Activated CD4-positive, alpha-beta T cell treated with anti-CD3 and anti-CD28 coated beads, Interleukin-2, amount 10 ng/mL, durations not matched to agents 7 days and 5 days (primary cell): ENCODE measurements at regions of chr3 and their contacts with region 1.

Region 1: GRCh38 chr3:156554842-156555687 is at the start of gene SSR3:
- DNase-seq: peak; percentile 99
- H3K4me3 Mint-ChIP-seq: peak within 1 kb of the TSS; percentile 95
- H3K27ac Mint-ChIP-seq: peak within 1 kb of the TSS; percentile 93
- H3K4me1 Mint-ChIP-seq: peaks cover 47% of the 10 kb centered on the region
- H3K27me3 Mint-ChIP-seq: no peaks in the 10 kb centered on the region
- total RNA-seq, gene SSR3: 139 to 143 TPM

Region 2: GRCh38 chr3:156542715-156543555 is 12.1 kb before region 1 on chr3:
- CTCF ChIA-PET with region 1: interaction called, 12 read pairs
- POLR2A ChIA-PET with region 1: no interaction called
- DNase-seq: no peak
- H3K4me3 Mint-ChIP-seq: no peak overlapping the region
- H3K27ac Mint-ChIP-seq: no peak overlapping the region
- H3K4me1 Mint-ChIP-seq: peaks cover 30% of the 10 kb centered on the region
- H3K27me3 Mint-ChIP-seq: no peaks in the 10 kb centered on the region

Region 3: DNA sequence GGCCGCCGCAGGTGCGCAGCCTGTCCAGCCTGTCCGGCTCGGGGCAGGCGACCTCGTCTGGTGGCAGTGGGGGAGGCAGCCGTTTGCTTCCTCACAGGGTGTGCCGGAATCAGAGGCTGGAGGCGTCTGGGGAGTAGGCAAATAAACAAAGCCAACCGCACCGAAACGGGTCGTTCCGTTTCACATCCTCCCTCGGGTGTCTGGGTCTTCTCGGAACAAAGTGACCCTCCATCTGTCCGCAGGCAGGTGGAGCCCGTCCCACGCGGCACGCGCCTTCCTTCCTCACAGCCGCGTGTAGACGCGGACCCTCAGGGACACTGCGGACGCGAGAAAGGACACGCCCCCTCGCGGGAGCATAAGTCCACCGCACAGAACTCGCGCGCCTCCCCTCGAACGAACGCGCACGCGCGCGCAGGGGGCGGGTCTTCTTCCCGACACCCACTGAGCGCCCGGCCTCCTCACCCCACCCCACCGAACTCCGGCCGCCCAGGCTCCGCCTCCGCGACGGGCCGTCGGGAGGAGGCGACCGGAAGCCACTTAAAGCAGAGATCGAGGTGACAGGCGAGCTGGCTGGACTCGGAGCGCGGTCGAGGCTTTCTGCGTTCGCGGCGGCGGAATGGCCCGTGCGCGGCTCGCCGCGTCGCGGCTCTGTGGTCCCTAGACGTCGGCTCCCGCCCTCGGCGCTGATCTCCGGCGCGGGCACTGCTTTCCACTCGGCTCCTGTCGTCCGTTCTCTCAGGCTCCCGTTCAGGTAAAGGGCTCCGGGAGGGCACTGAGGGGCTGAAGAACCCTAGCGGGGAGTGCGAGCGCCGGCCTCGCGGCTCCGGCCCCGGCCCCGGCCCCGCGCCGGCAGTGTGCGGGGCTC is 119.2 kb after region 1 on chr3 and contains the start of gene TIPARP:
- CTCF ChIA-PET with region 1: interaction called, 12 read pairs
- POLR2A ChIA-PET with region 1: interaction called, 5 read pairs
- DNase-seq: peak; percentile 99
- H3K4me3 Mint-ChIP-seq: peak within 1 kb of the TSS; percentile 95
- H3K27ac Mint-ChIP-seq: peak within 1 kb of the TSS; percentile 98
- H3K4me1 Mint-ChIP-seq: peaks cover 49% of the 10 kb centered on the region
- H3K27me3 Mint-ChIP-seq: no peaks in the 10 kb centered on the region
- total RNA-seq, gene TIPARP: 58.0 to 66.0 TPM